Activated T-helper 2 cell treated with anti-CD3 and anti-CD28 coated beads, Interferon-gamma antibody, Interleukin-2, Interleukin-4, amounts not matched to agents 10 μg/mL and 5 μg/mL and 100 μg/mL, durations not matched to agents 14 hours and 24 hours and 36 hours (primary cell): ENCODE measurements at regions of chr22 and their contacts with region 1.

Region 1: GRCh38 chr22:50691521-50691920 is 18.9 kb downstream of the SHANK3 start:
- DNase-seq: no peak
- H3K4me3 Mint-ChIP-seq: no peak overlapping the region
- H3K27ac Mint-ChIP-seq: no peak overlapping the region
- H3K4me1 Mint-ChIP-seq: peaks cover 9% of the 10 kb centered on the region
- H3K27me3 Mint-ChIP-seq: peaks cover 12% of the 10 kb centered on the region

Region 2: GRCh38 chr22:50627642-50628542 is 63.6 kb before region 1 on chr22 and contains the start of gene ARSA:
- intact Hi-C with region 1: loop called (anchors 5 kb)
- DNase-seq: peak; percentile 77
- H3K4me3 Mint-ChIP-seq: peak within 1 kb of the TSS; percentile 92
- H3K27ac Mint-ChIP-seq: peak within 1 kb of the TSS; percentile 53
- H3K4me1 Mint-ChIP-seq: peaks cover 15% of the 10 kb centered on the region
- H3K27me3 Mint-ChIP-seq: no peaks in the 10 kb centered on the region
- total RNA-seq, gene ARSA: 25.0 TPM in 2 replicates